IMR-90 (cell line): ENCODE measurements at regions of chr11 and their contacts with region 1.

Region 1: GRCh38 chr11:86116386-86116726 is 47.5 kb upstream of the PICALM start:
- DNase-seq: peak; percentile 98
- ATAC-seq: peak; percentile 80
- H3K4me3 ChIP-seq: no peak overlapping the region; the same call in 1 of the 2 replicates
- H3K27ac ChIP-seq: peak overlapping the region; percentile 59; the same call in 1 of the 2 replicates
- H3K4me1 ChIP-seq: peaks cover 9% of the 10 kb centered on the region
- H3K27me3 ChIP-seq: no peaks in the 10 kb centered on the region
- CTCF ChIP-seq: no peak
- POLR2A ChIP-seq: peak; percentile 30; the same call in 1 of the 2 replicates
- RAD21 ChIP-seq: no peak

Region 2: GRCh38 chr11:85647604-85648299 is 468.6 kb before region 1 on chr11 and contains the start of gene TMEM126A:
- CTCF ChIA-PET with region 1: no interaction called
- POLR2A ChIA-PET with region 1: interaction called, 17 read pairs
- dilution Hi-C with region 1: no loop called
- in situ Hi-C with region 1: no loop called
- intact Hi-C with region 1: no loop called
- DNase-seq: peak; percentile 75
- ATAC-seq: peak; percentile 99
- H3K4me3 ChIP-seq: peak within 1 kb of the TSS; percentile 89
- H3K27ac ChIP-seq: peak within 1 kb of the TSS; percentile 75
- H3K4me1 ChIP-seq: no peaks in the 10 kb centered on the region
- H3K27me3 ChIP-seq: no peaks in the 10 kb centered on the region
- CTCF ChIP-seq: no peak
- POLR2A ChIP-seq: peak; percentile 79; the same call in 1 of the 2 replicates
- RAD21 ChIP-seq: no peak
- total RNA-seq, gene TMEM126A: 60.4 and 87.2 TPM in 2 replicates

Region 3: GRCh38 chr11:85886089-85887056 is 230.0 kb before region 1 on chr11:
- CTCF ChIA-PET with region 1: no interaction called
- POLR2A ChIA-PET with region 1: no interaction called
- dilution Hi-C with region 1: no loop called
- in situ Hi-C with region 1: no loop called
- intact Hi-C with region 1: no loop called
- DNase-seq: peak; percentile 65
- ATAC-seq: peak; percentile 27; the same call in 1 of the 2 replicates
- H3K4me3 ChIP-seq: no peak overlapping the region
- H3K27ac ChIP-seq: no peak overlapping the region
- H3K4me1 ChIP-seq: peaks cover 14% of the 10 kb centered on the region
- H3K27me3 ChIP-seq: no peaks in the 10 kb centered on the region
- CTCF ChIP-seq: no peak
- POLR2A ChIP-seq: no peak
- RAD21 ChIP-seq: no peak

Region 4: GRCh38 chr11:86151174-86152005 is 35.0 kb after region 1 on chr11:
- CTCF ChIA-PET with region 1: no interaction called
- POLR2A ChIA-PET with region 1: no interaction called
- dilution Hi-C with region 1: no loop called
- in situ Hi-C with region 1: no loop called
- intact Hi-C with region 1: no loop called
- DNase-seq: peak; percentile 23
- ATAC-seq: peak; percentile 57
- H3K4me3 ChIP-seq: no peak overlapping the region
- H3K27ac ChIP-seq: peak overlapping the region; percentile 36
- H3K4me1 ChIP-seq: peaks cover 18% of the 10 kb centered on the region
- H3K27me3 ChIP-seq: no peaks in the 10 kb centered on the region
- CTCF ChIP-seq: no peak
- POLR2A ChIP-seq: no peak
- RAD21 ChIP-seq: no peak